Esophagus muscularis mucosa (tissue), 4 donors: ENCODE measurements at regions of chr3 and their contacts with region 1.

Region 1: GRCh38 chr3:179147873-179148615 is at the start of gene PIK3CA:
- DNase-seq: peak; percentile 98
- H3K4me3 ChIP-seq: peak within 1 kb of the TSS; percentile 95 to 96 (median 96)
- H3K27ac ChIP-seq: peak within 1 kb of the TSS; percentile 91 to 99 (median 98)
- H3K4me1 ChIP-seq: peaks cover 20 to 37% (median 33%) of the 10 kb centered on the region in 4 donors
- H3K27me3 ChIP-seq: no peaks in the 10 kb centered on the region
- CTCF ChIP-seq: no peak
- EP300 ChIP-seq: no peak
- POLR2A ChIP-seq: peak; percentile 11
- total RNA-seq, gene PIK3CA: 33.7 to 47.5 (median 36.0) TPM

Region 2: GRCh38 chr3:179015551-179016020 is 132.5 kb before region 1 on chr3:
- intact Hi-C with region 1: loop called (anchors 5 kb)
- DNase-seq: no peak
- H3K4me3 ChIP-seq: no peak overlapping the region
- H3K27ac ChIP-seq: no peak overlapping the region
- H3K4me1 ChIP-seq: peaks cover 0 to 11% (median 10%) of the 10 kb centered on the region in 4 donors
- H3K27me3 ChIP-seq: no peaks in the 10 kb centered on the region
- CTCF ChIP-seq: peak; percentile 83 to 92 (median 84)
- EP300 ChIP-seq: no peak
- POLR2A ChIP-seq: no peak

Region 3: DNA sequence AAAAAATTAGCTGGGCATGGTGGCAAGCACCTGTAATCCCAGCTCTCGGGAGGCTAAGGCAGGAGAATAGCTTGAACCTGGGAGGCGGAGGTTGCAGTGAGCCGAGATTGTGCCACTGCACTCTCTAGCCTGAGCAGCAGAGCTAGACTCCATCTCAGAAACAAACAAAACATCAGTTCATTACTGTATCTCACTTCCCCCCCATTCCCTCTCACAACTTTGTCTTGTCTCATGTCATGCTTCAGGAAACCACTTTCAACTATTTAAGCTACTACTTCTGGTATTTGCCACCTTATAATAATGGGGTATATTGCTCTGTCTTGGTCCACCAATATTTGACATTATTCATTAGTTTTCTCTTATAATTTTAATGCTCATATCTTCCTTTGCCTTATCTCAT is 26.3 kb after region 1 on chr3:
- intact Hi-C with region 1: loop called (anchors 2 kb)
- DNase-seq: no peak
- H3K4me3 ChIP-seq: no peak overlapping the region
- H3K27ac ChIP-seq: no peak overlapping the region
- H3K4me1 ChIP-seq: peaks cover 17 to 38% (median 34%) of the 10 kb centered on the region in 4 donors
- H3K27me3 ChIP-seq: no peaks in the 10 kb centered on the region
- CTCF ChIP-seq: no peak
- EP300 ChIP-seq: no peak
- POLR2A ChIP-seq: no peak

Region 4: GRCh38 chr3:179260949-179261765 is 113.1 kb after region 1 on chr3:
- intact Hi-C with region 1: loop called (anchors 5 kb)
- DNase-seq: peak; percentile 92
- H3K4me3 ChIP-seq: peak overlapping the region; percentile 59 to 89 (median 80)
- H3K27ac ChIP-seq: peak overlapping the region; percentile 69 to 83 (median 76)
- H3K4me1 ChIP-seq: peaks cover 0 to 12% (median 9%) of the 10 kb centered on the region in 4 donors
- H3K27me3 ChIP-seq: no peaks in the 10 kb centered on the region
- CTCF ChIP-seq: no peak
- EP300 ChIP-seq: no peak
- POLR2A ChIP-seq: no peak

Region 5: GRCh38 chr3:179292450-179292849 is 144.4 kb after region 1 on chr3:
- intact Hi-C with region 1: no loop called
- DNase-seq: peak; percentile 4
- H3K4me3 ChIP-seq: no peak overlapping the region
- H3K27ac ChIP-seq: no peak overlapping the region
- H3K4me1 ChIP-seq: no peaks in the 10 kb centered on the region
- H3K27me3 ChIP-seq: no peaks in the 10 kb centered on the region
- CTCF ChIP-seq: no peak
- EP300 ChIP-seq: no peak
- POLR2A ChIP-seq: no peak

Region 6: DNA sequence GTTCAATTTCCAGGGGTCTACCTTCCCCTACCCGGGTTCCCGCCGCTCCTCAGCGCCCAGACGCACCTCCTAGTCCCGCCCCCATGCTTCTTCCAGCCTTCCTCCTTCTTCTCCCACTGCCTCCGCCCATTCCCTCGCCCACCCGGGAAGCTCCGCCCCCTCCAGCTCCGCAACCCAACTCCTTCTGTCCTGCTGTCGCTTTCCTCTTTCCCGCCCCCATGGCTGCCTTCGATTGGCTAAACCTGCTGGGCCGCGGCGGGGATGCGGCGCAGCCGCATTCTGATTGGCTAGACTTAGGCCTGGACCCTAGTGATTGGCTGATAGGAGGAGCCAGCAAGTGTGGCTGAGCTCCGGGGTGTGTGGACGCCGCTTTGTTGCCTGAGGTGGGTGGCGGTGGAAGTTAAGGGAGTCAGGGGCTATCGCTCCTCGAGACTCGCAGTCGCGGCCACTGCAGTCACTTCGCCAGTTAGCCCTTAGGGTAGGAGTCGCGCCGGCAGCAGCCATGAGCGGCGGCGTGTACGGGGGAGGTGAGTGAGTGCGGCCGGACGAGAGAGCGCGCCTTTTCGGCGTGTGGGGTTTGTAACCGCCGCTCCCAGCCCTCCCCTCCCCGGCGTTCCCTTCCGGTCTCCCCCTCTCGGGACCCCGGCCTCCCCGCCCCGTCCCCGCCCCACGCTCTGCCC is 414.7 kb after region 1 on chr3 and contains the start of gene ACTL6A:
- intact Hi-C with region 1: loop called (anchors 10 kb)
- DNase-seq: peak; percentile 100
- H3K4me3 ChIP-seq: peak within 1 kb of the TSS; percentile 85 to 98 (median 86)
- H3K27ac ChIP-seq: peak within 1 kb of the TSS; percentile 84 to 92 (median 87)
- H3K4me1 ChIP-seq: peaks cover 6 to 24% (median 15%) of the 10 kb centered on the region in 4 donors
- H3K27me3 ChIP-seq: no peaks in the 10 kb centered on the region
- CTCF ChIP-seq: no peak
- EP300 ChIP-seq: no peak
- POLR2A ChIP-seq: no peak
- total RNA-seq, gene ACTL6A: 27.4 to 34.5 (median 34.1) TPM